ENCODE measurements at regions of chr12 and their contacts with region 1.

Region 1: DNA sequence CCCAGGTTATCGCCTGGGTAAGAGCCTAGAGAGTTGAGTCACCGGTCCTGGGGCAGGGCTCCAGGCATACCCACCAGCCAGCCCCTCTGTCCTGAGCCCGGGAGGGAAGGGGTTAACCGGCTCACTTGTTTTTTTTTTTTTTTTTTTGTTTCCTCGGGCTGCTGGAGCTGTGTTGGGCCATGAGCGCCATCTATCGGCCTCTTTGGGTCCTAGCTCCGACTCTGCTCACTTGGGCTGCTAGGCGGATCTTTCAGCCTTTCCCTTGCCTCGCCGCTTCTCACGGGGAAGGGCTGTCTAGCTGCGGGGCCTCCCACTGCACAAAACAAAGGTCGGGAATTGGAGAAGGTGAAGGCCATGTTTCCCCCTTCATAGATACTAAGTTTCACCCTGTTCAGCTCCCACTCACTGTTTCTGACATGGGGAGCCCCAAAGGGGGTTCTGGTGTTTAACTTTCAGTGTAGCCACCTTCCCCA is 2.8 kb upstream of the SMUG1 start:
- DNase-seq: peak; percentile 58 to 85 (median 76)
- ATAC-seq: peak; percentile 82
- H3K4me3 ChIP-seq: no peak overlapping the region
- H3K4me3 Mint-ChIP-seq: peak overlapping the region in 3 of 10 donors; percentile 10 to 44 (median 32)
- H3K27ac ChIP-seq: no peak overlapping the region
- H3K27ac Mint-ChIP-seq: peak overlapping the region in 3 of 9 donors; percentile 3 to 48 (median 17)
- H3K4me1 ChIP-seq: peaks cover 8 to 9% of the 10 kb centered on the region in 2 donors
- H3K4me1 Mint-ChIP-seq: peaks cover 17 to 31% (median 27%) of the 10 kb centered on the region in 7 donors
- H3K27me3 ChIP-seq: peaks cover 0 to 6% of the 10 kb centered on the region in 2 donors
- H3K27me3 Mint-ChIP-seq: peaks cover 39 to 61% (median 46%) of the 10 kb centered on the region in 5 donors

Region 2: DNA sequence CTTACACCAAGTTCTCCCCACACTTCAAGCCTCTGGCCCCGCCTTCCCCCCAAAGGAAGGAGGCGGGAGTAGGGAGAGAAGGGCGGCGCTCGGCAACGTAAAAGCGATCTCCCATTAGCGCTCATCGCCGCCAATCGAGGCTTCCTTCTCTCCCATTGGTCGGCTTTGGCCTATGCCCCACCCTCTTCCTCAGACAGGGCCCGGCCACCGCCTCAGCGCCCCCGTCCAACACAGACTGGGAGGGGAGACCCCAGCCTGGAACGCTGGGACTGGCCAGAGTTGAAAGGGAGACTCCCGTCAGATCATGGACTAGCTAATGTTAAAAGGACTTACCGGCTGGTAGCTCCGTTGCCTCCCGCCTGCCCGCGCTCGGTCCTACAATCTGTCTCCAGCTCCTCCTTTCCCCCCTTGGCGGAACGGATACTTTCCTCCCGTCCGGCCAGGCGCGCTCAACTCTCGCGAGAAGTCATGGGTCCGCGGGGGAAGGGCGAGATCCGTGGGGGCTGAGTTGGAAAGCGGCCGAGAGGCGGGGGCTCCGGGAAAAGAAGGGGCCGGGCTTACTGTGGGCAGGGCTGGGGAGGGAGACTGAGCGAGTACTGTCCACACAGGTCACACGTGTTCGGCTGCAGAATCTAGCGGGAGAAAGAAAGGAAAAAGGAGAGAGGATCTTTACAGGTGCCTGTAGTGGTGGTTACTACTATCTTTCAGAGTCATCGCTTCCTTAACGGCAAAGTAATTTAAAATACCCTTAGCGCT is 565.5 kb before region 1 on chr12 and contains the start of gene ATF7:
- CTCF ChIA-PET with region 1: no interaction called
- POLR2A ChIA-PET with region 1: no interaction called
- intact Hi-C with region 1: loop called in 1 of 2 experiments (anchors 2 kb)
- DNase-seq: peak; percentile 95 to 100 (median 99)
- ATAC-seq: peak; percentile 97
- H3K4me3 ChIP-seq: peak within 1 kb of the TSS; percentile 92
- H3K4me3 Mint-ChIP-seq: peak within 1 kb of the TSS; percentile 97 to 100 (median 98)
- H3K27ac ChIP-seq: peak within 1 kb of the TSS; percentile 83
- H3K27ac Mint-ChIP-seq: peak within 1 kb of the TSS; percentile 95 to 99 (median 97)
- H3K4me1 ChIP-seq: peaks cover 20 to 32% of the 10 kb centered on the region in 2 donors
- H3K4me1 Mint-ChIP-seq: peaks cover 30 to 55% (median 49%) of the 10 kb centered on the region in 7 donors
- H3K27me3 ChIP-seq: no peaks in the 10 kb centered on the region
- H3K27me3 Mint-ChIP-seq: peaks cover 0 to 6% (median 0%) of the 10 kb centered on the region in 5 donors
- total RNA-seq, gene ATF7: 21.9 to 39.5 (median 30.9) TPM

Region 3: DNA sequence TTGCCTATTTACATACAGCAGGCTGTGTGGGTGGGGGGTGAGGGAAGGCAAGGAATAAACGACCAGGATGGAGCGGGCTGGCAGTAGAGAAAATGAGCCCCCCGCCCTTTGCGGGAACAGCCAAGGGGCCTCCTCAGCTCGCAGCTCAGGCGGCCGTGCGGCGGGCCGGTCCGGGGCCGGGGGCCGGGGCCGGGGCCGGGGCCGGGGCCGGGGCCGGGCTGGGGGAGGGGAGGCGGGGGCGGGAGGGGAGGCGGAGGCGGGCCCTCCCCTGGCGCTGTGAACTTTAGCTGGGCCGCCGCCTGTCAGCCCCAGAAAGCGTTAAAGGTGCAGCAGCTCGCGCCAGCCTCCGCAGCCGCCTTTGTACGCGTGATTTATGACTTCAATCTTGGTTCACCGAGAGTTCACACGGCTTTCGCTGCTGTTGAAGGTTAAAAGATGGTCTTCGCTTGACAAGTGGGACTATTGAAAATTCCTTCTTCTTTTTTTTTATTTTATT is 109.1 kb before region 1 on chr12:
- CTCF ChIA-PET with region 1: interaction called, 3 read pairs
- POLR2A ChIA-PET with region 1: no interaction called
- intact Hi-C with region 1: loop called in 1 of 2 experiments (anchors 2 kb)
- DNase-seq: peak; percentile 20 to 61 (median 45)
- ATAC-seq: no peak
- H3K4me3 ChIP-seq: peak overlapping the region; percentile 50
- H3K4me3 Mint-ChIP-seq: peak overlapping the region; percentile 77 to 92 (median 88)
- H3K27ac ChIP-seq: peak overlapping the region; percentile 66
- H3K27ac Mint-ChIP-seq: peak overlapping the region; percentile 81 to 98 (median 90)
- H3K4me1 ChIP-seq: peaks cover 0 to 5% of the 10 kb centered on the region in 2 donors
- H3K4me1 Mint-ChIP-seq: peaks cover 24 to 37% (median 31%) of the 10 kb centered on the region in 7 donors
- H3K27me3 ChIP-seq: no peaks in the 10 kb centered on the region
- H3K27me3 Mint-ChIP-seq: peaks cover 0 to 32% (median 0%) of the 10 kb centered on the region in 5 donors

Region 4: GRCh38 chr12:54214553-54215406 is 23.2 kb after region 1 on chr12:
- CTCF ChIA-PET with region 1: interaction called, 4 read pairs
- POLR2A ChIA-PET with region 1: no interaction called
- intact Hi-C with region 1: loop called (anchors 1 kb)
- DNase-seq: peak; percentile 80 to 90 (median 89)
- ATAC-seq: peak; percentile 95
- H3K4me3 ChIP-seq: peak overlapping the region; percentile 56
- H3K4me3 Mint-ChIP-seq: peak overlapping the region; percentile 72 to 93 (median 82)
- H3K27ac ChIP-seq: no peak overlapping the region
- H3K27ac Mint-ChIP-seq: peak overlapping the region in 2 of 9 donors; percentile 28 to 52
- H3K4me1 ChIP-seq: peaks cover 25 to 35% of the 10 kb centered on the region in 2 donors
- H3K4me1 Mint-ChIP-seq: peaks cover 18 to 52% (median 31%) of the 10 kb centered on the region in 7 donors
- H3K27me3 ChIP-seq: no peaks in the 10 kb centered on the region
- H3K27me3 Mint-ChIP-seq: peaks cover 0 to 40% (median 5%) of the 10 kb centered on the region in 5 donors

Measured in naive thymus-derived CD4-positive, alpha-beta T cell (primary cell).